ENCODE measurements at regions of chr18 and their contacts with region 1.

Region 1: DNA sequence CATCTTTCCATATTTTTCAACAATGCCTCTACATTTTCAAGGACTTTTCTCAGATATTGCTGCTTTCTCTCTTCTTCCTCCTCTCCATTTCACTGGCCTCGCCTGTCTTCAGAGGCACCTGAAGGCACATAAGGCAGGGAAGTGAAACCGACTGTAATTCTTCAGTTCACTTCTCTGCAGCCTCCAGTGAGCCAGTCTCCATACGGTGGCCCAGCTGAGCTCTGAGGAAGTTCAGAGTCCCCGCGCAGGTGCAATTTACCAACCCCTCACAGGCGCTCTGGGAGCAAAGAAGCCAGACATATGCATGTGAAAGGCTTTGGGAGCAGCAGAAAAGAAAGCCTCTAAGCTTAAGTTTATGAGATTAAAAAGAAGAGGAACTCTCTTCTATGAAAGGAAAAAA is 12.4 kb downstream of the KLHL14 start:
- DNase-seq: no peak
- ATAC-seq: no peak
- H3K4me3 ChIP-seq: no peak overlapping the region
- H3K27ac ChIP-seq: no peak overlapping the region
- H3K4me1 ChIP-seq: no peaks in the 10 kb centered on the region
- H3K27me3 ChIP-seq: peaks cover 0 to 1% of the 10 kb centered on the region in 2 donors

Region 2: GRCh38 chr18:32060026-32060425 is 700.4 kb before region 1 on chr18:
- intact Hi-C with region 1: no loop called
- DNase-seq: no peak
- ATAC-seq: no peak
- H3K4me3 ChIP-seq: no peak overlapping the region
- H3K27ac ChIP-seq: no peak overlapping the region
- H3K4me1 ChIP-seq: no peaks in the 10 kb centered on the region
- H3K27me3 ChIP-seq: no peaks in the 10 kb centered on the region

Region 3: DNA sequence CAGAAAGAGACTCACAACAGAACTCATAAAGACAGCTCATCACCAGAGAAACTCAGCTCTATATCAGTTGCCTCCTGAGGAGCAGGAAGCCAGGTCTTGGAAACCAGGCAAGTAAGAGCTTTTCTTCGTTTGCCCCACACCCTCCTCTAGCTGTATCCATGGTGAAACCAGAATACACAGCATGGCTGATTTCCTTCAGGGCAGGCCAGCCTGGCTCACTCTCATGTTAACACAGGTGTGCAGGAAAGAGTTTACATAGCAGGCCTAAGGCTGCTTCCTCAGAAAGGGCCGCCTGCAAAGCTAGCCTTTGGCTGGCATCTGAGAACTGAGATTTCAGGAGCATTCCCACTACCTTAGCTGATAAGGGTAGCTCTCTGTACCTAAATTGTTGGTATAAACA is 53.2 kb before region 1 on chr18:
- intact Hi-C with region 1: loop called in 1 of 2 experiments (anchors 10 kb)
- DNase-seq: no peak
- ATAC-seq: no peak
- H3K4me3 ChIP-seq: no peak overlapping the region
- H3K27ac ChIP-seq: no peak overlapping the region
- H3K4me1 ChIP-seq: no peaks in the 10 kb centered on the region
- H3K27me3 ChIP-seq: no peaks in the 10 kb centered on the region